Naive thymus-derived CD4-positive, alpha-beta T cell (primary cell): ENCODE measurements at regions of chr6 and their contacts with region 1.

Region 1: DNA sequence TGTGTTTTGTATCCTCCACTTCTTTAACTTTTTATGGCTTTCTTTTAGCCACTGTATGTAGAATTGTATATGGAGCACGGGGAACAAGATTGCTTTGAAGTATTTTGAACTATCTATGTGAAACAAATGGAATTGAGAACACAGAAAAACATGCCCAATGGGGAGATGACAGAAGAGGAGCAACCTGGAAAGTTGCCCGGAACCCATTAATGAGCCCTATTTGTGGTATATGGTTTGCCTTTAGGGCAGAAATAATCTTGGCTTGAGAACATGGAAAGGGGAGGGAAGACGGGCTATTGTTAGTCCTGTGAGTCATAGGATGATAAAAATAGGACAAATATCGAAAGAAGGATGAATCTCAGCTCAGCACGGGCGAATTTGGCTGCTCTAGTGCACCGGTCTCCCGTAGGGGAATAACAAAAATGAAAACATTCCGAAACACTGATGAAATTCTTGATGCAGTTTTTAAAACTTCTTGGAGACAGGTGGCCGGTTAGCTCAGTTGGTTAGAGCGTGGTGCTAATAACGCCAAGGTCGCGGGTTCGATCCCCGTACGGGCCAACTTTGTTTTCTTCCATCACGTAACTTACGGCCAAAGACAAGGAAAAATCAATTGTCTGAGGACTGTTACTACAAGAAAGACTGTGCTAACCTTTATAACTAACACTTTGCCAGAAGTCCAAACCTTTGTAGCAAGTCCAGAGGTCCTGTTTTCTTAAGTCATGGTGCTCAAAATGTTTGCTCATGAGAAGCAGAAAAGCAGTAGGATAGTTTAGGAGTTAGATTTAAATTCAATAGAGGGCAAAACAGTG is 15.7 kb downstream of the HMGN4 start:
- DNase-seq: peak; percentile 44 to 86 (median 83)
- ATAC-seq: peak; percentile 66
- H3K4me3 ChIP-seq: peak overlapping the region; percentile 75
- H3K4me3 Mint-ChIP-seq: no peak overlapping the region
- H3K27ac ChIP-seq: peak overlapping the region; percentile 65
- H3K27ac Mint-ChIP-seq: no peak overlapping the region
- H3K4me1 ChIP-seq: peaks cover 7 to 18% of the 10 kb centered on the region in 2 donors
- H3K4me1 Mint-ChIP-seq: peaks cover 12 to 35% (median 24%) of the 10 kb centered on the region in 7 donors
- H3K27me3 ChIP-seq: no peaks in the 10 kb centered on the region
- H3K27me3 Mint-ChIP-seq: peaks cover 0 to 2% (median 0%) of the 10 kb centered on the region in 5 donors

Region 2: GRCh38 chr6:26322645-26323482 is 231.0 kb before region 1 on chr6:
- CTCF ChIA-PET with region 1: no interaction called
- POLR2A ChIA-PET with region 1: interaction called, 6 read pairs
- intact Hi-C with region 1: loop called in 1 of 2 experiments (anchors 1 kb)
- DNase-seq: peak in 8 of 9 donors; percentile 67 to 85 (median 79)
- ATAC-seq: peak; percentile 72
- H3K4me3 ChIP-seq: peak overlapping the region; percentile 82
- H3K4me3 Mint-ChIP-seq: peak overlapping the region; percentile 64 to 92 (median 88)
- H3K27ac ChIP-seq: peak overlapping the region; percentile 60
- H3K27ac Mint-ChIP-seq: peak overlapping the region; percentile 44 to 93 (median 89)
- H3K4me1 ChIP-seq: peaks cover 5 to 8% of the 10 kb centered on the region in 2 donors
- H3K4me1 Mint-ChIP-seq: peaks cover 2 to 58% (median 36%) of the 10 kb centered on the region in 7 donors
- H3K27me3 ChIP-seq: no peaks in the 10 kb centered on the region
- H3K27me3 Mint-ChIP-seq: peaks cover 5 to 21% (median 17%) of the 10 kb centered on the region in 5 donors

Region 3: DNA sequence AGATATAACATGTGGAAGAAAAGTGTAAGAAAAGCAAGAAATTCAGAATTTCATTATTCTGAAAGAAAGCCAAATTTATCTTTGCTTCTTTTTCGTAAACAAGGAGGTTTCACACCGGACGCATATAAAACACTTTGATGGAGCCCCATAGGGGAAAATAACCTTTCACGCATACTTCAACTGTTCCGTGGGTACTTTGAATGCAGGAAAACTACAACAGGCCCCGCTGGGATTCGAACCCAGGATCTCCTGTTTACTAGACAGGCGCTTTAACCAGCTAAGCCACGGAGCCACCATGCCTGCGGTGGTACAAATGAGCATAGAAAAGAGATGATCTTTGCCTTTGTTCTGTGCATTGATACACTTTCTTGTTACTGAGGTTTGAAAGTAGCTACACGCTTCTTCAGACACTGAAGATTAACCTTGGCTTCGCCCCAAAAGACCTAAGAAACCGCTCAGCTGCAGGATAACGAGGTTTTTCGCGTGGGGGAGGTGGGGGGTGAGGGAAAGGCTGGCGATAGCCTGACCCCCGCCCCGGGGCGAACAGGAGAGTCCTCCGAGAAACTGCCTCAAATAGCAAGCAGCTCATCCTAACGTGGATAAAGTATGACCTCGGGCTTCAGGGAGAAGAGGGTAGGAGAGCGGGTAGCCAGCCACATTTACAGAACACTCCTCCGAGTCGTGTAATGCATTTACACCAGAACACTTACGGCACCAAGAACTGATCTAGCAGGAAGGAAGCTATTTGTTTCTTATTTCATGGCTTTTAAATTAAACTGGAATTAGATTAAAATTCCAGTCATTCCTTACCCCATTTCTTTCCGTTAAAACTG is 20.9 kb before region 1 on chr6:
- CTCF ChIA-PET with region 1: interaction called, 4 read pairs
- POLR2A ChIA-PET with region 1: interaction called, 101 read pairs
- intact Hi-C with region 1: loop called (anchors 1 kb)
- DNase-seq: peak; percentile 67 to 94 (median 93)
- ATAC-seq: peak; percentile 57
- H3K4me3 ChIP-seq: peak overlapping the region; percentile 93
- H3K4me3 Mint-ChIP-seq: peak overlapping the region; percentile 83 to 99 (median 96)
- H3K27ac ChIP-seq: peak overlapping the region; percentile 72
- H3K27ac Mint-ChIP-seq: peak overlapping the region; percentile 88 to 98 (median 97)
- H3K4me1 ChIP-seq: peaks cover 14 to 23% of the 10 kb centered on the region in 2 donors
- H3K4me1 Mint-ChIP-seq: peaks cover 17 to 70% (median 45%) of the 10 kb centered on the region in 7 donors
- H3K27me3 ChIP-seq: no peaks in the 10 kb centered on the region
- H3K27me3 Mint-ChIP-seq: peaks cover 0 to 7% (median 0%) of the 10 kb centered on the region in 5 donors